ENCODE measurements at regions of chr1 and their contacts with region 1.

Region 1: GRCh38 chr1:28144203-28145135 is 32.0 kb downstream of the PTAFR start:
- DNase-seq: no peak
- ATAC-seq: peak; percentile 85
- H3K4me3 Mint-ChIP-seq: peak overlapping the region; percentile 29
- H3K27ac Mint-ChIP-seq: peak overlapping the region; percentile 78
- H3K4me1 Mint-ChIP-seq: peaks cover 49% of the 10 kb centered on the region
- H3K27me3 Mint-ChIP-seq: no peaks in the 10 kb centered on the region
- CTCF ChIP-seq: no peak

Region 2: GRCh38 chr1:28118640-28119307 is 25.7 kb before region 1 on chr1:
- CTCF ChIA-PET with region 1: no interaction called
- POLR2A ChIA-PET with region 1: interaction called, 10 read pairs
- intact Hi-C with region 1: no loop called
- DNase-seq: no peak
- ATAC-seq: no peak
- H3K4me3 Mint-ChIP-seq: no peak overlapping the region
- H3K27ac Mint-ChIP-seq: no peak overlapping the region
- H3K4me1 Mint-ChIP-seq: peaks cover 16% of the 10 kb centered on the region
- H3K27me3 Mint-ChIP-seq: no peaks in the 10 kb centered on the region
- CTCF ChIP-seq: no peak

Region 3: GRCh38 chr1:28716336-28716735 is 571.9 kb after region 1 on chr1:
- CTCF ChIA-PET with region 1: no interaction called
- POLR2A ChIA-PET with region 1: no interaction called
- intact Hi-C with region 1: no loop called
- DNase-seq: no peak
- ATAC-seq: no peak
- H3K4me3 Mint-ChIP-seq: no peak overlapping the region
- H3K27ac Mint-ChIP-seq: no peak overlapping the region
- H3K4me1 Mint-ChIP-seq: no peaks in the 10 kb centered on the region
- H3K27me3 Mint-ChIP-seq: no peaks in the 10 kb centered on the region
- CTCF ChIP-seq: no peak

Measured in activated B cell treated with CpG ODN at 0.5 μM for 24 hours (primary cell).